Transverse colon (tissue), 4 donors: ENCODE measurements at regions of chr1 and their contacts with region 1.

Region 1: GRCh38 chr1:61914823-61915482 is 172.7 kb downstream of the PATJ start:
- DNase-seq: no peak
- H3K4me3 ChIP-seq: no peak overlapping the region
- H3K27ac ChIP-seq: no peak overlapping the region
- H3K4me1 ChIP-seq: no peaks in the 10 kb centered on the region
- H3K27me3 ChIP-seq: no peaks in the 10 kb centered on the region
- CTCF ChIP-seq: no peak
- EP300 ChIP-seq: no peak
- POLR2A ChIP-seq: no peak

Region 2: DNA sequence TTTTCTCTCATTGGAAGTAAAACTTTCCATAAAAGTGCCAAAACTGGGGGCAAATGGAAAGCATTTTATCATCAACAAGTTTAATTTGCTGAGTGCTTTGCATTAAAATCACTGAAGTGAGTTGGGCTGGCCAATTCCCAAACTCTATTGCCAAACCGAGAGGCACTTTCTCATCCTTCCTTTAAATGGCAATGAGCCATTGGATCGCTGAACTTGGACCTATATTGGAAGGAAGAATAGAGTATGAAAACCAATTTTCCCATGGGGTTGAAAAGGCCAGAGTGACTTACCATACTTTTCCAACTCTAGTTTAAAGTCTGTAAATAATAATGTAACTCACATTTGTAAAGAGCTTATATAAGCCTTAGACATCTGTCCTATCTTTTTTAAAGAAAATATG is 1652.3 kb before region 1 on chr1:
- in situ Hi-C with region 1: no loop called
- intact Hi-C with region 1: loop called (anchors 5 kb)
- DNase-seq: no peak
- H3K4me3 ChIP-seq: no peak overlapping the region
- H3K27ac ChIP-seq: no peak overlapping the region
- H3K4me1 ChIP-seq: no peaks in the 10 kb centered on the region
- H3K27me3 ChIP-seq: no peaks in the 10 kb centered on the region
- CTCF ChIP-seq: no peak
- EP300 ChIP-seq: no peak
- POLR2A ChIP-seq: no peak